ENCODE measurements at regions of chr15 and their contacts with region 1.

Region 1: DNA sequence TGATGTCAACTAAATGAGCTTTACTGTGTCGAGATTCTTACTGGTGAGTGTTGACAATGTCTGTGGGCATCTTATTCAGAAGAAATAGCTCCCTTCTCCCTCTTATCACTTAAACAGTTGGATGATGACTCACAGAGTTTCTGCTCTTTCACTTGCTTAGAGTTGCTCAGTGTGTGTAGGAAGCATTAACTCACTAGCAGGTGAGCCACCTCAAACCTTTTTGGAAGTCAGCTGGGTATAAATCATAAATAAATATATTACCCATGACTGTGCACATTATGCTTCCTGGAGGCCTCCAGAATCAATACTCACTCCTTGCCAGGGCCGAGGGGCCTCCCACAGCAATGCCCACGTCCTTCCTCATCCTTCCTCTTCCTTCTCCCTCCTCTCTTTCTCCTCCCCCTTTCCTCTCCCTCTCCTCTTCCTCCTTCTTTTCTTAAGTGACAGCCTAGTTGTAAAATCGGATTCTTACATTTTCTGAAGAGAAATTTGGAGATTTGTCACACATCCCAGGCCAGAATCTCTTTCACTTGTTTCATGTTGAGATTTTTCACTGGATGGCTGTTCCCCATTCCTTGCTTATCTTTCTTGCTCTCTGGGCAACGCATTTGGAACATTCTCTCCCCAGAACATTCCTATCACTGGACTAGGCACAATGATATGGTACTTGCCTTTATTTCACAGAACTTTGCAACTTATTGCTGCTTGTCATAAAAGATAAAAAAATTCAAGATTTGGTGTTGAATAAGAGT is 17.5 kb downstream of the SHC4 start:
- DNase-seq: peak; percentile 84
- ATAC-seq: peak; percentile 92
- H3K4me3 ChIP-seq: peak overlapping the region; percentile 29; the same call in 1 of the 2 replicates
- H3K27ac ChIP-seq: peak overlapping the region; percentile 94
- H3K4me1 ChIP-seq: peaks cover 26% of the 10 kb centered on the region
- H3K27me3 ChIP-seq: no peaks in the 10 kb centered on the region
- CTCF ChIP-seq: no peak

Region 2: GRCh38 chr15:48963524-48964113 is 17.4 kb after region 1 on chr15 and contains the start of gene SHC4:
- CTCF ChIA-PET with region 1: no interaction called
- POLR2A ChIA-PET with region 1: interaction called, 4 read pairs
- intact Hi-C with region 1: loop called (anchors 2 kb)
- DNase-seq: peak; percentile 75
- ATAC-seq: peak; percentile 48
- H3K4me3 ChIP-seq: peak within 1 kb of the TSS; percentile 81
- H3K27ac ChIP-seq: peak within 1 kb of the TSS; percentile 89
- H3K4me1 ChIP-seq: peaks cover 34% of the 10 kb centered on the region
- H3K27me3 ChIP-seq: no peaks in the 10 kb centered on the region
- CTCF ChIP-seq: peak; percentile 47
- total RNA-seq, gene SHC4: 2.4 and 4.3 TPM in 2 replicates